ENCODE measurements at regions of chr6 and their contacts with region 1.

Region 1: DNA sequence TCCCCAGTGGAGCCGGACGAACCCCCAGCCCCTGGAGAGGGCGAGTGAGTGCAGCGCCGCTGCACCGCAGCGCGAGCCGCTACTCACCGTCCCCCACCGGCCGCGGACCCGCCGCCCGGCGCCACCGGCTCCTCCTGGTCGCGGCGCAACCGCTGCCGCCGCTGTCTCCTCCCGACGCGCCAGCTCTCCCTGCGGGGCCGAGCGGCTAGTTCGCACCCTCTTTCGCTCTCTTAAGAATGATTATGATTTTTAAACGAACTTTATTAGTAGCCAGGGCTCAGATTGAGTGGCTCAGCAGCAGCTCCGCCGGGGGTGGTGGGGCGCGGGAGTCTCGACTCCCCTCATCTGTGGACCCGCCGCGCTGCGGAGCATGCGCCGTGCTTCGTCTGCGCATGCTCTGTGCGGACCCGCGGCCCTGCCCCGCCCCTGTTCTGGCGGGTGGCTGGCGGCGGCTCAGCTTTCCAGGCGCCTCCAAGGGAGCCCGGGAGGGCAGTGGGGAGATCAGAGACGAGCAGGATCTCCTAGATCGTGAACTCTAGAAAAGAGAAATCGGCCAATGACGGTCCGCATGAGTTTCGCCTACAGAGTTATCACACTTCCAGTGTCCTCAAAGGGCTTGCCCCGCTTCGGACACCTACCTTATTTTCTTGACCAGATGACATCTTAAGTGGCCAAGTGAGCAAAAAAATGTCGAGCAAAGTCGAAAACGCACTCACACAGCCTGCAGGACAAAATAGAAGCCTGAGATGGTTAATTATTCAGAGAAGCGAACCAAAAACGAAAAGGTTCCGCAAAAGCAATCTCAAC is at the start of gene RAB23:
- DNase-seq: peak; percentile 60 to 91
- H3K4me3 ChIP-seq: peak within 1 kb of the TSS; percentile 95
- H3K27ac ChIP-seq: no peak within 1 kb of the TSS
- H3K4me1 ChIP-seq: peaks cover 26% of the 10 kb centered on the region
- H3K27me3 ChIP-seq: no peaks in the 10 kb centered on the region
- CTCF ChIP-seq: no peak
- total RNA-seq, gene RAB23: 9.3 and 13.8 TPM in 2 replicates

Region 2: GRCh38 chr6:56891754-56892153 is 330.4 kb before region 1 on chr6:
- CTCF ChIA-PET with region 1: no interaction called
- POLR2A ChIA-PET with region 1: no interaction called
- intact Hi-C with region 1: no loop called
- DNase-seq: no peak
- H3K4me3 ChIP-seq: no peak overlapping the region
- H3K27ac ChIP-seq: peak overlapping the region; percentile 92
- H3K4me1 ChIP-seq: peaks cover 24% of the 10 kb centered on the region
- H3K27me3 ChIP-seq: no peaks in the 10 kb centered on the region
- CTCF ChIP-seq: no peak

Region 3: GRCh38 chr6:57267586-57268293 is 45.6 kb after region 1 on chr6:
- CTCF ChIA-PET with region 1: no interaction called
- POLR2A ChIA-PET with region 1: no interaction called
- intact Hi-C with region 1: loop called (anchors 5 kb)
- DNase-seq: peak; percentile 69 to 88
- H3K4me3 ChIP-seq: no peak overlapping the region
- H3K27ac ChIP-seq: peak overlapping the region; percentile 21; the same call in 1 of the 2 replicates
- H3K4me1 ChIP-seq: peaks cover 8% of the 10 kb centered on the region
- H3K27me3 ChIP-seq: no peaks in the 10 kb centered on the region
- CTCF ChIP-seq: peak; percentile 77